Transverse colon (tissue), 4 donors: ENCODE measurements at regions of chr5 and their contacts with region 1.

Region 1: DNA sequence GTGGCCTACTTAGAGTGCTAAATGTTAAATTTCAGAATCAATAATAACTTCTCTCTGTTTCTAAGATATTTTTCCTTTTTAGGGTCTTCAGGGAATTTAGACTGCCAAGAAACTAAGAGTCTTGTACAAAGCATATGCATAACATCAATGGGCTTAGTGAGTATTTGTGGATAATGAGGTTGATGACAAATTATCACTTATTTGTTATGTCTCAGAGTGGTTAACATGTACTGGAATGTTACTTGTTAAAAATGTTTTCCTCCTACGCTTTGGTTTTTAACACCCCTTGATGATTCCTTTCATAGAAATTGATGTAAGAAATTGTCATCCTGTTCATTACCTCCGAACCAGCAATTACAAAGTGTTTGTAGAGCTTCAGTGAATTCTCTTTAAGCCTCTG is 144.3 kb downstream of the MRPS30 start:
- DNase-seq: no peak
- H3K4me3 ChIP-seq: no peak overlapping the region
- H3K27ac ChIP-seq: no peak overlapping the region
- H3K4me1 ChIP-seq: no peaks in the 10 kb centered on the region
- H3K27me3 ChIP-seq: no peaks in the 10 kb centered on the region
- CTCF ChIP-seq: no peak
- EP300 ChIP-seq: no peak
- POLR2A ChIP-seq: no peak

Region 2: GRCh38 chr5:44900273-44900954 is 52.7 kb before region 1 on chr5:
- in situ Hi-C with region 1: no loop called
- intact Hi-C with region 1: no loop called
- DNase-seq: no peak
- H3K4me3 ChIP-seq: no peak overlapping the region
- H3K27ac ChIP-seq: no peak overlapping the region
- H3K4me1 ChIP-seq: no peaks in the 10 kb centered on the region
- H3K27me3 ChIP-seq: no peaks in the 10 kb centered on the region
- CTCF ChIP-seq: no peak
- EP300 ChIP-seq: no peak
- POLR2A ChIP-seq: no peak

Region 3: GRCh38 chr5:44933686-44934085 is 19.4 kb before region 1 on chr5:
- in situ Hi-C with region 1: no loop called
- intact Hi-C with region 1: loop called (anchors 1 kb)
- DNase-seq: no peak
- H3K4me3 ChIP-seq: no peak overlapping the region
- H3K27ac ChIP-seq: no peak overlapping the region
- H3K4me1 ChIP-seq: no peaks in the 10 kb centered on the region
- H3K27me3 ChIP-seq: no peaks in the 10 kb centered on the region
- CTCF ChIP-seq: no peak
- EP300 ChIP-seq: no peak
- POLR2A ChIP-seq: no peak

Region 4: GRCh38 chr5:45132972-45133371 is 179.9 kb after region 1 on chr5:
- in situ Hi-C with region 1: no loop called
- intact Hi-C with region 1: no loop called
- DNase-seq: no peak
- H3K4me3 ChIP-seq: no peak overlapping the region
- H3K27ac ChIP-seq: no peak overlapping the region
- H3K4me1 ChIP-seq: no peaks in the 10 kb centered on the region
- H3K27me3 ChIP-seq: no peaks in the 10 kb centered on the region
- CTCF ChIP-seq: no peak
- EP300 ChIP-seq: no peak
- POLR2A ChIP-seq: no peak